ENCODE measurements at regions of chrX and their contacts with region 1.

Region 1: DNA sequence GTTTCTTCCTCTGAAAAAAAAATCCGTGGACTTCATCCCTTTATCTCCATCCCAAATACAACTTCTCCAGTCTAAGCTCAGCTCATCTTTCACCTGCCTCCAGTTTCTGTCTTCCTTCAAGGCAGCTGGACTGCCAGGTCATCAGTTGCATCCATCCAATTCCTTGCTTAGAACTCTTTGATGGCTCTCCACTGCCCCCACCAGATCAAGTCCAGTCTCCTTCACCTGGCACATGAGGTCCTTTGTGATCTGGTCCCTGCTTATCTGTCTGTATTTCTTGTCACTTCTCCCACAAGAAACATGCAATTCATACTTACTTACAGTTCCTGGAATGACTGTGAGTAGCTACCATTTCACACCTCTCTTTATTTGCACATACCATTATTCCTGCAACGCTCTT is 33.8 kb downstream of the OTUD6A start:
- DNase-seq: no peak
- H3K4me3 ChIP-seq: no peak overlapping the region
- H3K27ac ChIP-seq: no peak overlapping the region
- H3K4me1 ChIP-seq: no peaks in the 10 kb centered on the region
- CTCF ChIP-seq: 0 out of 2 replicates have a peak, but pooled peaks have one; percentile 14

Region 2: GRCh38 chrX:69424161-69424560 is 671.9 kb before region 1 on chrX:
- CTCF ChIA-PET with region 1: no interaction called
- POLR2A ChIA-PET with region 1: no interaction called
- intact Hi-C with region 1: loop called (anchors 10 kb)
- DNase-seq: peak; percentile 5
- H3K4me3 ChIP-seq: no peak overlapping the region
- H3K27ac ChIP-seq: no peak overlapping the region
- H3K4me1 ChIP-seq: no peaks in the 10 kb centered on the region
- CTCF ChIP-seq: peak; percentile 66

Region 3: DNA sequence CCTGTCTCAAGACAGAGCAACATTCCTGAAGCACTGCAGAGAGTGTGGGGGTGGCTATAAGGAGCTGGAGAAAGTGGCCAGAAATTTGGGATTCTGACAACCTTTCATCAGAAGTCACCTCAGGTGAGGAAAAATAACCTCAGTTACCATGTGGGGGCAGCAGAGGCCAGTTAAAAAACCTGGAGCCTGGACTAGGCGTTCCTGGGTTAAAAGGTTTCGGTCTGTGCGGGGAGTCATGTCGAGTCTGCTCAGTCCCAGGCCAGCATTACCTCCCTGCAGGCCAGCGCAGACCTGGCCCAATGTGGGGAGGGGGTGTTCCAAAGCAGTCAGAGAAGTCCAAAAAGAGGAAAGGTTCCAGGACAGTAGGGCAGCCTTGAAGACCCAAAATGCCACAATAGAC is 602.9 kb before region 1 on chrX:
- CTCF ChIA-PET with region 1: no interaction called
- POLR2A ChIA-PET with region 1: no interaction called
- intact Hi-C with region 1: loop called (anchors 1 kb)
- DNase-seq: peak; percentile 47
- H3K4me3 ChIP-seq: no peak overlapping the region
- H3K27ac ChIP-seq: no peak overlapping the region
- H3K4me1 ChIP-seq: no peaks in the 10 kb centered on the region
- CTCF ChIP-seq: peak; percentile 69

Measured in OCI-LY7 (cell line).